Tibial artery (tissue), 4 donors: ENCODE measurements at regions of chr5 and their contacts with region 1.

Region 1: DNA sequence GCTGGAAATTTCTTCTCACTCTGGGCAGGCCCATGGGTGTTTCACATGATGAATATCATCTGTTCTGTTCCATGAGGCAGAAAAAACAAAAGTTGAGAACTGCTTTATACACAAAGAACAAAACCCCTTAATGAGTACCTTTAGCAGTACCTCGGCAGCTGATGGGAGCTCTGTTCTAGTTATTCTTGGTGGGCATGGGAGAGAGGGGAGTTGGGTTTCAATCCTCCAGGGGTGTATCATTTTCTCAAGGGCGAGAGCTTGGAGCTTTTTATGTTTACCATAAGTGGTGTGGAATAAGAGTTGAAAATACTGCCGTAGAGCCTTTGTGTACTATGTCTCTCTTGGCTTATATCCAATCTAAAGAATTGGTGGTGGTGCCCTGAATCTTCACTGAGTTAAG is 103.3 kb upstream of the ZNF608 start:
- DNase-seq: no peak
- H3K4me3 ChIP-seq: no peak overlapping the region
- H3K27ac ChIP-seq: no peak overlapping the region
- H3K4me1 ChIP-seq: no peaks in the 10 kb centered on the region
- H3K27me3 ChIP-seq: no peaks in the 10 kb centered on the region
- CTCF ChIP-seq: no peak

Region 2: DNA sequence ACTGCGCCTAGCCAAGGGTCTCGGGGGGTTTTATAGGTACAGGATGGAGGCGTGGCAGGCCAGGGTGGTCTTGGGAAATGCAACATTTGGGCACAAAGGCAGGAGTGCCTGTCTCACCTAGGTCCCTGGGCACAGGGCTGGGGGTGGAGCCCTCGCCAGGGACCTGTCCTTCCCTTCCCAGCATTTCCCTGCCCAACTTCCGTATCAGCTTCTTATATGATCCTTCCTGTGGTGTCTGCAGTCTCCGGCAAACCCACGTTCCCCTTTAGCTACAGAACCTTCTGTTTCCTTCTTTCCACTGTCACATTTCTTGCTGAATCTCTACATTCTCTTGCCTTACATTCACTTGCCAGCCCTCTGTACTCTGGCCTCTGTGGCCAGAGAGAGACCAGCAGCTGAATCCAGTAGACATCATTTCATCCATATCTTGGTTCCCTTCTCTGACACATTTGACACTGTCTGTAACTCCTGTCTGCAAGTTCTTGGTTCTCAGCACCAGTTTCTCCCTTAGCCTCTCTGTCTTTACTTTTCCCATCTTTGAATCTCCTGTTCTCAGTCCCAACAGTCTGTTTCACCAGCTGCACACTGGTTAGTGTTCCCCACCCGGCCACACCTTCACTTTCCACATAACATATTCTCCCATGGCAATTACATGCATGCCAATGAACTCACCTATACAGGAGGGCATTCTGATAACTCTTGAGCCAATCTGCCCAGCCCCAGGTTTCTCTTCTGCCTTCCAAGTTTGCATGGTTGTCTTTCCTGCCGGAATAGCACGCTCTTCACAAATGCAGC is 31.3 kb after region 1 on chr5:
- intact Hi-C with region 1: loop called (anchors 1 kb)
- DNase-seq: peak in 1 of 2 donors; percentile 27
- H3K4me3 ChIP-seq: no peak overlapping the region
- H3K27ac ChIP-seq: no peak overlapping the region
- H3K4me1 ChIP-seq: no peaks in the 10 kb centered on the region
- H3K27me3 ChIP-seq: no peaks in the 10 kb centered on the region
- CTCF ChIP-seq: no peak

Region 3: GRCh38 chr5:124935065-124935464 is 85.3 kb after region 1 on chr5:
- intact Hi-C with region 1: no loop called
- DNase-seq: no peak
- H3K4me3 ChIP-seq: no peak overlapping the region
- H3K27ac ChIP-seq: no peak overlapping the region
- H3K4me1 ChIP-seq: peaks cover 0 to 9% (median 6%) of the 10 kb centered on the region in 4 donors
- H3K27me3 ChIP-seq: no peaks in the 10 kb centered on the region
- CTCF ChIP-seq: no peak